ENCODE measurements at regions of chr11 and their contacts with region 1.

Region 1: DNA sequence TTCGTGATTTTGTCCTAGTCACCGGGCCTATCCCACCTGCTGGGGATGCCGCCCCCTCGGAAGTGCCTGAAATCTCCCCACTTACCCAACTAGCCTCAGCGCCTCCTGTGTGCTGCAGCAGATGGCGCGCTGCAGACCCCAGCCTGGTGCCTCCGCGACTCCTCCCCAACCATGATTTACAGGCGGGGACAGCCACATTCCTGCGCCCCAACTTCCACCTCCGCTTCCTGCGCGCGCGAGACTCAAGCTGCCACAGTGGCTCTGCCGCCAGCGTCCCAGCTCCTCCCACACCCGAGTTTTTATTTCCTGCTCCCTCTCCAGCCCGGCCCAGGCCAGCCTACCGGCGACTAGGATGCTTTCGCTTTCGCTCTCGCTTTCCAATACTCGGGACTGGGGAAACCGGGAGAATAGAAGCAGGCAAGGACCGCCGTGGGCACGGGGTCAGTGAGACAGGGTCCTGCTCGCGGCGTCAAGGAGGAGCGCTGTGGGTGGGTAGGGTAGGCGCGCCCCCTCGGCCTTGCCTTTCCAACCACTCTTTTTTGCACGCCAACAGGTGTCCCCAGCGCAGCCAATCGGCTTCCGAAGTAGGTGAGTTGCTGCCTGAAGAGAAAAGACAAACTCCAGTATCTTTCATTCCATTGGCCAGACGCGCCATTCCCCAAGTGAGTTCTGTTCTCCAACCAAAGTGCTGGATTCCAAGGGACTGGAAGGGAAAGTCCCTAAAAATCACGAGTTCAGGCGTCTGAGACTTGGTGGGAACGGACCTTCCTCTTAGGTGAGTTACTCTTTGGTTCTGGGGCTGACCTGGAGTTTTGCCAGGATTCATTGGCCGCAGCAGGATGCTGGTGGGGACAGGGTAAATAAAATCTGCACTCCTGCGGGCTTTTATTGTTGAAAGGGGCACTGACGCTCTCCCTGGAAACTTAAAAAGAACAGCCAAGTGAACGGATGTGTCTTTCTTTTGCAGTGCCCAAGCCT is at the start of gene FAM111A:
- DNase-seq: peak; percentile 73
- ATAC-seq: peak; percentile 76
- H3K4me3 Mint-ChIP-seq: peak within 1 kb of the TSS; percentile 99
- H3K27ac Mint-ChIP-seq: peak within 1 kb of the TSS; percentile 99
- H3K4me1 Mint-ChIP-seq: peaks cover 71% of the 10 kb centered on the region
- H3K27me3 Mint-ChIP-seq: no peaks in the 10 kb centered on the region
- CTCF ChIP-seq: no peak
- total RNA-seq, gene FAM111A: 51.5 and 64.3 TPM in 2 replicates

Region 2: DNA sequence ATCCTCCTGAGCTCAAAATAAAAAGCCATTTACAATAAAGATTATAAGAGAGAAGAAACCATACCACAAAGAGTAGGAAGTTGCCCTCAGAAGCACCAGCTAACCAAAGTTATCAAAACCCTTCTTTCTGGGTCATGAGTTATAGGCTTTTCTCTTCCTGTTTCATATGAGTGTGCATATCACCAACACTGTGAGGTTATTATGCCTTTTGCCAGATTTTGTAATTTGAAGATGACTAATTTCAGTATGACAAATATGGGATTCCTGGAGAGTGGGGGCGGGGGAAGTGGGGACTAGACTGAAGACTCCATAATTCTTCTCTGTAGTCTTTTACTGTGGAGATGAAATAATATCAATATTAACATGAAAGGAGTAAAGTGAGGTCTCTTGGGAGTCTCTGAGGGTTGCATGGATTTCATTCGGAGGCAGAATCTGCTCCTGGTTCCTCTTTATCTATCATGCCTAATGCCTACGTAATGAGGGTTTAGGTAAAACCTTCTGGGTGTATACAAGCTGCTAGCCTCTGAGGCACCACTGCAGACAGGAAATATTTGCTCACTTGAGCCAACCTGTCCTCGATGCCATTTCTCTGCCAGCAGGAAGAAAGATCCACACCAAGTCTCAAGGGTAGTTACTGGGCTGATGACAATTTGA is 569.2 kb before region 1 on chr11:
- CTCF ChIA-PET with region 1: no interaction called
- POLR2A ChIA-PET with region 1: interaction called, 21 read pairs
- intact Hi-C with region 1: loop called (anchors 2 kb)
- DNase-seq: no peak
- ATAC-seq: peak; percentile 35
- H3K4me3 Mint-ChIP-seq: peak overlapping the region; percentile 96
- H3K27ac Mint-ChIP-seq: peak overlapping the region; percentile 100
- H3K4me1 Mint-ChIP-seq: peaks cover 67% of the 10 kb centered on the region
- H3K27me3 Mint-ChIP-seq: no peaks in the 10 kb centered on the region
- CTCF ChIP-seq: no peak

Region 3: GRCh38 chr11:59097113-59097708 is 45.6 kb before region 1 on chr11:
- CTCF ChIA-PET with region 1: interaction called, 4 read pairs
- POLR2A ChIA-PET with region 1: interaction called, 13 read pairs
- intact Hi-C with region 1: no loop called
- DNase-seq: no peak
- ATAC-seq: peak; percentile 23
- H3K4me3 Mint-ChIP-seq: peak overlapping the region; percentile 73
- H3K27ac Mint-ChIP-seq: peak overlapping the region; percentile 91
- H3K4me1 Mint-ChIP-seq: peaks cover 91% of the 10 kb centered on the region
- H3K27me3 Mint-ChIP-seq: no peaks in the 10 kb centered on the region
- CTCF ChIP-seq: no peak

Region 4: DNA sequence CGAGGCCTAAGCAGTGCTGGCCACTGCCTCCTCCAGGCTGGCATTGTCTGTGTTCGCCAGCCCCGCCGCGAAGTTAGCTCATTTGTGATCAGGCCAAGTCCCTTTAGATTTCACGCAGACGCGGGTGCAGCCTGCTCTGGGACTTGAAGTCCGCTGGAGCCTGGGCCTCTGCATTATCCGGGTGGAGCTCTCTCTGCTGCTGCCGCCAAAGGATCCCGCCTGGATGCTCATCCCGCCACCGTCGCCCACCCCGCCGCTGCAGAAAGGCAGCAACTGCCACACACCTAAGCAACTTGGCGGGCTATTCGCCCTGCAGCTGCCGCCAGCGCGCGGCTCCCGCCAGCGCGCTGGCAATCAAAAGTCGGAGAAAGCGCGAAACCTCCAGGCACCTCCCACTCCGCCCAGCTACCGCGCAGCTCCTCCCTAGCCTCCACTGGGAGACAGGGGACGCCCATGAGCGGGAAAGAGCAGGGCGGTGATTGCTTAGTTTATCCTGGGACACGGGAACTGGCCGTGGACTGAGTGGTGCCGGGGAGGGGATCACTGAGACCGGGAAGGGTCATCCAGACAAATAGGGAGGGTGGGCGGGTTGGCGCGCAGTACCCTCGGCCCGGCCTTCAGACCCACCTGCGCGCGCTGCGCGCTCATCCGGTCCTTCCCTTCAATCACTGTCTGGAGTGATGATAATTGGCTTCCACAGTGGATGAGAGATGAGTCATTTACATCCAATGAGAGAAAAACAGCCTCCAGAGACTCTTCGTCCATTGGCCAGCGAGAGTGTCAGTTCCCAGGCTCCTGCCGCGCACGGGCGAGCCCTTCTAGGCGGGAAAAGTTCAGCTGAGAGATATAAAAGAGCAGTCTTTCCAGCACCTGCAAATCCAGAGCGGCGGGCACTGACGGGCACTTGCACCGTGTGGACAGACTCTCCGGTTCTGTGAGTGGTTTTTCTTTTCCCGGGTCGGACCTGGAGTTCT is 36.2 kb before region 1 on chr11 and contains the start of gene FAM111B:
- CTCF ChIA-PET with region 1: interaction called, 5 read pairs
- POLR2A ChIA-PET with region 1: interaction called, 19 read pairs
- intact Hi-C with region 1: no loop called
- DNase-seq: peak; percentile 43
- ATAC-seq: peak; percentile 33
- H3K4me3 Mint-ChIP-seq: peak within 1 kb of the TSS; percentile 94
- H3K27ac Mint-ChIP-seq: peak within 1 kb of the TSS; percentile 84
- H3K4me1 Mint-ChIP-seq: peaks cover 84% of the 10 kb centered on the region
- H3K27me3 Mint-ChIP-seq: no peaks in the 10 kb centered on the region
- CTCF ChIP-seq: no peak
- total RNA-seq, gene FAM111B: 48.0 and 49.1 TPM in 2 replicates

Region 5: GRCh38 chr11:59207988-59208451 is 65.2 kb after region 1 on chr11:
- CTCF ChIA-PET with region 1: no interaction called
- POLR2A ChIA-PET with region 1: interaction called, 5 read pairs
- intact Hi-C with region 1: loop called (anchors 2 kb)
- DNase-seq: no peak
- ATAC-seq: peak; percentile 45
- H3K4me3 Mint-ChIP-seq: peak overlapping the region; percentile 98
- H3K27ac Mint-ChIP-seq: peak overlapping the region; percentile 93
- H3K4me1 Mint-ChIP-seq: peaks cover 93% of the 10 kb centered on the region
- H3K27me3 Mint-ChIP-seq: no peaks in the 10 kb centered on the region
- CTCF ChIP-seq: no peak

Region 6: DNA sequence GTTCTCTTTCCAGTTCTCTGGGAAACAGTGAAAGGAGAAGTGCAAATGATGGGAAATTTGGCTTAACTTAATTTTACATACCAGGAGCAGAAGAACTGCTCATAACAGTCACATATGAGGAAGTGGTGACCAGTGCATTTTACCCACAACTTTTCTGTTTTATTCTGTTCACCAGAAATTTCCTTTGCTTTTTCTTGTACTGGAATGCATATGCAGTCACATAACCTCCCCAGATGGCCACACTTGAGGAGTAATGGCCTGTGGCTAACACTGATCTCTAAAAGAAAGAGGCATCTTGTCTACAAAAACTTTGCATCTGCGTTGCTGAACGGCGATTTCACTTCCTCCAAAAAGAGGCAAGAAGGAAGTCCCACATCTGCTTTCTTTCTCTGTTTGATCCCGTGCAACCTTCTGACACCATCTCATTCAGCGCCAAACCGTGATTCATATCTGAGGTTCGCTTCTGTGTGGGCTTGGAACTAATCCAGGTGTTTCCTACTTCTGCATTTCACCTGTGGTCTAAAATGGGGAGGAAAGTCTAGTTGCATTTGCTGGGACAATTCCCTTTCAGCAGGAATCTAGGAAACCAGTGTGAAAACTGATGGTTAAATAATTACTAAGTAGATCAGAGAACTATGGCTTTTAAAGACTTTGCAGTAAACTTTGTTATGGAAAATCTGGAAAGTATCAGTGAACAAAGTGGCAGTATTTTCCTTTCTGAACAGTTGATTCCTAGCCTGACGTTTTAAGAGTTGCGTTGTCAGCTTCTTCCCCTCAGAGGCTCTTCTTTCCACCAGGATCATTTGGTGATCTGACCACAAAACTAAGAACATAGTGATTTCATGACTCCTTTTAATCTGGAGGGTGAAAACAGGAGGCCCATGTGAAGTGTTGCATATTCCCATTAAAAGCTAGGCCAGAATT is 74.1 kb after region 1 on chr11:
- CTCF ChIA-PET with region 1: no interaction called
- POLR2A ChIA-PET with region 1: interaction called, 5 read pairs
- intact Hi-C with region 1: loop called (anchors 2 kb)
- DNase-seq: peak; percentile 35
- ATAC-seq: peak; percentile 69
- H3K4me3 Mint-ChIP-seq: peak overlapping the region; percentile 52
- H3K27ac Mint-ChIP-seq: peak overlapping the region; percentile 91
- H3K4me1 Mint-ChIP-seq: peaks cover 100% of the 10 kb centered on the region
- H3K27me3 Mint-ChIP-seq: no peaks in the 10 kb centered on the region
- CTCF ChIP-seq: no peak

Region 7: GRCh38 chr11:59263225-59263894 is 120.5 kb after region 1 on chr11:
- CTCF ChIA-PET with region 1: no interaction called
- POLR2A ChIA-PET with region 1: no interaction called
- intact Hi-C with region 1: no loop called
- DNase-seq: peak; percentile 52
- ATAC-seq: peak; percentile 65
- H3K4me3 Mint-ChIP-seq: no peak overlapping the region
- H3K27ac Mint-ChIP-seq: no peak overlapping the region
- H3K4me1 Mint-ChIP-seq: peaks cover 71% of the 10 kb centered on the region
- H3K27me3 Mint-ChIP-seq: no peaks in the 10 kb centered on the region
- CTCF ChIP-seq: no peak

Region 8: DNA sequence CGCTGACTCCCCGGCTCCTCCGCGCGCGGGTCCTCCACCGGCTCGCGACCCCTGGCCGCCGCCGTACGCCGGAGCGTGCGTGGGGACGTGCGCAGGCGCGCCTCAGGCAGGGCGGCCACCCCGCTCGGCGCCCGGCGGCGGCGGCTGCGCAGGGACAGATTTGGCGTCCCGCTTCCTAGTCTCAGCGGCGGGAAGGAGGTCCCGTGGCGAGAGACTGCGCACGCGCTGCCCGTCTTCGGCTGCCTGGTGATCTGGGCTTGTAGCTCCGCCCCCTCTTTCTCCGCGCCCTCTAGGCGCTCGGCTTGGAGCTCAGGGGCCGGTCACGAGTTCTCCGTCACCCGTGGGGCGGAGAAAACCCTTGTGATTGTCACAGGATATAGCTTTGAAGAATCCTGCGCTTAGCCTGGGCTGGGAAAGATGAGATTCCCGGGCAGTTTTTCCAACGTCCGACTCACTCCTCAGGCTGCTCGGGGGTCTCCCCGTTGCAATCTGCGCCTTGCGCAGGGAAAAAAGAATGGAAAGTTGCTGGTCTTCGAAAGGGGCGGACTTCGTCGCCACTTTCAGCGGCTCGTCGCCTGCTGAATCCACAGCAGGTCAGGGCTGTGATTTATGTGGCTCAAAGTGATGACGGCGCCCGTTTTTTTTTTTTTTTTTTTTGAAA is 526.3 kb after region 1 on chr11 and contains the start of gene PATL1:
- CTCF ChIA-PET with region 1: no interaction called
- POLR2A ChIA-PET with region 1: no interaction called
- intact Hi-C with region 1: loop called (anchors 5 kb)
- DNase-seq: peak; percentile 95
- ATAC-seq: peak; percentile 88
- H3K4me3 Mint-ChIP-seq: peak within 1 kb of the TSS; percentile 93
- H3K27ac Mint-ChIP-seq: peak within 1 kb of the TSS; percentile 97
- H3K4me1 Mint-ChIP-seq: peaks cover 27% of the 10 kb centered on the region
- H3K27me3 Mint-ChIP-seq: no peaks in the 10 kb centered on the region
- CTCF ChIP-seq: no peak
- total RNA-seq, gene PATL1: 42.0 and 45.1 TPM in 2 replicates